Right ventricle myocardium inferior (tissue), 1 donor: ENCODE measurements at regions of chr12 and their contacts with region 1.

Region 1: GRCh38 chr12:111599459-111600204 is 517 bp upstream of the ATXN2 start:
- DNase-seq: peak; percentile 94
- ATAC-seq: peak; percentile 92

Region 2: DNA sequence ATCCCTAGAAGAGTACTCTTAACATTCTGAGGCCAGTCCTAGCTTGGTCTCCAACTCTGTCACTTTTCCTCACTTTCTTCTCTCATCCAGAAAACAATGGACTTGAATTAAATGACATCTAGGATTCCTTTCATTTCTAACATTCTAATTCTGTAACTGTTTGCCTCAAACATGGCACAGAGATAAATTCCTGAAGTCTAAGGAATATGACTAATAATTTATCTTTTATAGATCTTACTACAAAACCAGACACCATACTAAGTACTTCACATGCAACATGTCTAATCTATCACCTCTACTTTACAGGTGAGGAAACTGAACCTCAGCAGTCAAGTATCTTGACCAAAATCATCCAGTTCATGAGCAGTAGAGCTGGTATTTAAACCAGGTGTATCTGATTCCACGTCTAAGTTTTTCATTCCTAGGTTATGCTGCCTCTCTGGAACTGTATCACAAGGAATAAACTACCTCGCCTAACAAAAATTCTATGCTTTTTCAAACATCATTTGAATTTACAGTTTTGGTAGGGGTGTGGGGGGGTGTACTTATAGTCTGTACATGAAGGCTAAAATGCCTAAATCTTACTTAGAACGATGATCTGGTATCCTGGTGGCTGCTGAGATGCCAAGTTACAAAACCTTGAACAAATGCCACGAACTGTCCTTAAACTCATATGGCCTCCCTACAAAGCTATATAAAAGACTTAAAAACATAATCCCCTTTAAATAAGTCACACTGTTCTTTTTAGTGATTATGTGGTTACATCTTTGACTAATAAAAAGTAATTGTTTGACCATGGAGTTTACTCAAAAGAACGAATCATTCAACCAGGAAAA is 42.1 kb before region 1 on chr12:
- intact Hi-C with region 1: loop called (anchors 5 kb)
- DNase-seq: no peak
- ATAC-seq: no peak

Region 3: DNA sequence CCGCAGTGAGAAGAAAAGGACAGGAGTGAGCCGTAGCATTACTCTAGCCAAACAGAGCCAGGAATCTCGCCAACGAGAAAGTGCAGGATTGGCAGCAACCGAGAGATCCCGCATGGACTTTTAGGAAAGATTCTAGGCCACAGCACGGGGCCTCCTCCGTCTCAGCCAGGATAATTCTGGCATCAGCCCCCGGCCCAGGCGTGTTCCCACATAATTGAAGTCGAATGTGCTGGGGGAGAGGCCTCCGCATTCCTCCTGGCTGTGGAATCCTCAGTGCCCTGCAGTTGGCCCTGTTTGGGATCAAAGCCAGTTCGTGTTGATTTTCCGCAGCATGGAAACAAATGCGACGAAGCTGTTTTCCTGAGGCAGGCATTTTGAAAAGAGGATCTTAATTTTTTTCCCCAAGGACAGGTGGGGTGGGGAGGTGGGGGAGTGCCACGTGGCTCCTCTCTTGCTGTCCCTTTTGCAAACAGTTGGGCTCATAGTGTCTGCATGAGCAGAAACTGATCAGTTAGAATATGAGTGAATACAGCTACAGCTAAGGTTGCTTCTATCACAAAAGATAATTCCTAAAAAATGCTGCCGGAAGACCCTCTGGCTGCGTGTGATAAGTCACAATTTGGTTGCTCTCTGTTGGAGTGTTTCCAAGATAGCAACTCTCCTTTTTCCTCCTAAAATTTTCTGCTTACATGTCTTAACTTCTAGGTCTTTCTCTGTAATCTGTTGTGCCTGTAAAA is 36.7 kb after region 1 on chr12:
- intact Hi-C with region 1: loop called (anchors 5 kb)
- DNase-seq: peak; percentile 78
- ATAC-seq: peak; percentile 79

Region 4: GRCh38 chr12:111715279-111715678 is 115.6 kb after region 1 on chr12:
- intact Hi-C with region 1: no loop called
- DNase-seq: peak; percentile 83
- ATAC-seq: peak; percentile 94